MCF 10A (cell line): ENCODE measurements at regions of chr10 and their contacts with region 1.

Region 1: GRCh38 chr10:119080521-119081260 is at the start of gene EIF3A:
- DNase-seq: peak; percentile 89
- H3K4me3 Mint-ChIP-seq: peak within 1 kb of the TSS; percentile 100
- H3K27ac Mint-ChIP-seq: peak within 1 kb of the TSS; percentile 94
- H3K4me1 Mint-ChIP-seq: peaks cover 12% of the 10 kb centered on the region
- H3K27me3 Mint-ChIP-seq: no peaks in the 10 kb centered on the region
- CTCF ChIP-seq: no peak
- total RNA-seq, gene EIF3A: 190 and 226 TPM in 2 replicates

Region 2: DNA sequence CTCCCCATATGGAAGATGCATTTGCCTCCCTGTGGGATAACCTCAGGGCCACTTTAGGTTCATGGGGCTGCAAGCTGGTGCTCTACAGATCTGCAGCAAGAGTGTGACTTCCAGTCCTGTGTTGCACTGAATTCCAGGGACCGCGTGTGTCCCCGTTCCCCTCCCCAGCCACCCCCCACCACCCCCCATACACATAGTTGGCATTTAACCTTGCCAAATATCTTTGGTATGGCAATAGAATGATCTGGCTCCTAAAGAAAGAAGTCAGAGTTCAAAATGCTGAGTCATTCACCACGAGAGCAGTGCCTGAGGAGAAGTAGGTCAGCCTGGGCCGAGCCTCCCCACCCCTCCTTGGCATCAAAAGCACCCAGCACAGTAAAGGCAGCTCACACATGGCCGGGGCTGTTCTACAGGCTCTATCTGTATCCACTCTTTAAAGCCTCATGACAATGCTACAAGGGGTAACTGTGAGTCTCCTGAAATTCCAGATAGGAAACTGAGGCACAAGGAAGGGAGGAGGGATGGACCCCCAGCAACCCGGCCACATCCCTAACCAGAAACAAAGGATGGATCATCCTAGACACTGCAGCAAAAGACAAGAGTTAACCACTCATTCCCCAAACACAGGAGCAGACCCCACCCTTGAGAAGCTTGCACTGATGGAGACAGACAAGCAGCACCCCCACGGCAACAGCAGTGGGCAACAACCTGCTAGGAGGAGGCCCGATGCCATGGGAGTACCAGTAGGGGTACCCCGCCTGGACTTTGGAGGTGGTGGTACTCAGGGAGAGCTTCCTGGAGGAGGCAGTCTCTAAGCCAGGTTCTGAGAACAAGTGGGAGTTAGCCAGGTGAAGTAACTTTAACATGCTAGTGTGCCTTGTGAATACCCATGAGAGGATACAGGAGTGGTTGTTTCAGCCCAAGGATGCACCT is 121.4 kb before region 1 on chr10:
- CTCF ChIA-PET with region 1: no interaction called
- POLR2A ChIA-PET with region 1: no interaction called
- intact Hi-C with region 1: no loop called
- DNase-seq: peak; percentile 86
- H3K4me3 Mint-ChIP-seq: no peak overlapping the region
- H3K27ac Mint-ChIP-seq: no peak overlapping the region
- H3K4me1 Mint-ChIP-seq: peaks cover 28% of the 10 kb centered on the region
- H3K27me3 Mint-ChIP-seq: no peaks in the 10 kb centered on the region
- CTCF ChIP-seq: no peak

Region 3: GRCh38 chr10:119006451-119007210 is 74.1 kb before region 1 on chr10:
- CTCF ChIA-PET with region 1: no interaction called
- POLR2A ChIA-PET with region 1: interaction called, 11 read pairs
- intact Hi-C with region 1: loop called (anchors 2 kb)
- DNase-seq: peak; percentile 98
- H3K4me3 Mint-ChIP-seq: no peak overlapping the region
- H3K27ac Mint-ChIP-seq: peak overlapping the region; percentile 46
- H3K4me1 Mint-ChIP-seq: peaks cover 30% of the 10 kb centered on the region
- H3K27me3 Mint-ChIP-seq: no peaks in the 10 kb centered on the region
- CTCF ChIP-seq: no peak

Region 4: GRCh38 chr10:119028900-119029612 is 51.6 kb before region 1 on chr10:
- CTCF ChIA-PET with region 1: no interaction called
- POLR2A ChIA-PET with region 1: interaction called, 8 read pairs
- intact Hi-C with region 1: loop called (anchors 5 kb)
- DNase-seq: peak; percentile 72
- H3K4me3 Mint-ChIP-seq: peak overlapping the region; percentile 52
- H3K27ac Mint-ChIP-seq: no peak overlapping the region
- H3K4me1 Mint-ChIP-seq: peaks cover 38% of the 10 kb centered on the region
- H3K27me3 Mint-ChIP-seq: no peaks in the 10 kb centered on the region
- CTCF ChIP-seq: peak; percentile 8

Region 5: GRCh38 chr10:119090968-119091367 is 10.3 kb after region 1 on chr10:
- CTCF ChIA-PET with region 1: interaction called, 3 read pairs
- POLR2A ChIA-PET with region 1: interaction called, 21 read pairs
- intact Hi-C with region 1: no loop called
- DNase-seq: peak; percentile 80
- H3K4me3 Mint-ChIP-seq: no peak overlapping the region
- H3K27ac Mint-ChIP-seq: peak overlapping the region; percentile 49
- H3K4me1 Mint-ChIP-seq: peaks cover 20% of the 10 kb centered on the region
- H3K27me3 Mint-ChIP-seq: no peaks in the 10 kb centered on the region
- CTCF ChIP-seq: no peak

Region 6: DNA sequence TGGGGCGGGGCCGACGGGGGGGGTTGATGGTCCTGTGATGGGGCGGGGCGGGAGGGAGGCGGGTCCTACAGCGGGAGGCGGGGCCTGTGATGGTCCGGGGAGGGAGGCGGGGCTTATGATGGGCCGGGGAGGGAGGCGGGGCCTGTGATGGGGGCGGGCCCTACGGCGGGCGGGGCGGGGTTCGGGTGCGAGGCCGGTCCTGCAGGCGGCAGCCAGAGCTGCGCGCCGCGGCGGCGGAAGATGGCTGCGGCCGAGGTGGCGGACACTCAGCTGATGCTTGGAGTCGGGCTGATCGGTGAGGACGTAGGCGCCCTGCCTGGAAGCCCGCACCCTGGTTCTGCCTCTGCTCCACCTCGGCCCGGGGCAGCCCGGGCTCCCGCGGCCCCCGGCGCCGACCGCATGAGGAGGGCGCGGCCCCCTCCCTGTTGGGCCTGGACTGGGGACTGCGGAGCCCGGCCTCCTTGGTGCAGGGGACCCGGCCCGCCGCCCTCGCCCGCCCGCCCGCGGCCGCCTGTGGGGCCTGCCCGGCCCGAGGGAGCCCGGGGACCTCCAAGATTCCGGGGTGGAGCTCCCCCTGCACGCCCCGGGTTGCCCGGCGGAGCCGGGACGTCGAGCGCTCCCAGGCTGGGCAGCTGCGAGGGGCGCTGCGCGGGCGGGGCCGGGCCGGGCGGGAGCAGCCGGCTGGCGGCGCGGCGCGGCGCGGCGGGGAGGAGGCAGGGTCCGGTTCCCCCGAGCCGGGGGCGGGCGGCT is 23.4 kb after region 1 on chr10 and contains the start of gene DENND10:
- CTCF ChIA-PET with region 1: interaction called, 5 read pairs
- POLR2A ChIA-PET with region 1: interaction called, 126 read pairs
- intact Hi-C with region 1: loop called (anchors 1 kb)
- DNase-seq: peak; percentile 73
- H3K4me3 Mint-ChIP-seq: peak within 1 kb of the TSS; percentile 66
- H3K27ac Mint-ChIP-seq: no peak within 1 kb of the TSS
- H3K4me1 Mint-ChIP-seq: peaks cover 19% of the 10 kb centered on the region
- H3K27me3 Mint-ChIP-seq: no peaks in the 10 kb centered on the region
- CTCF ChIP-seq: no peak
- total RNA-seq, gene DENND10: 27.2 and 35.3 TPM in 2 replicates

Region 7: DNA sequence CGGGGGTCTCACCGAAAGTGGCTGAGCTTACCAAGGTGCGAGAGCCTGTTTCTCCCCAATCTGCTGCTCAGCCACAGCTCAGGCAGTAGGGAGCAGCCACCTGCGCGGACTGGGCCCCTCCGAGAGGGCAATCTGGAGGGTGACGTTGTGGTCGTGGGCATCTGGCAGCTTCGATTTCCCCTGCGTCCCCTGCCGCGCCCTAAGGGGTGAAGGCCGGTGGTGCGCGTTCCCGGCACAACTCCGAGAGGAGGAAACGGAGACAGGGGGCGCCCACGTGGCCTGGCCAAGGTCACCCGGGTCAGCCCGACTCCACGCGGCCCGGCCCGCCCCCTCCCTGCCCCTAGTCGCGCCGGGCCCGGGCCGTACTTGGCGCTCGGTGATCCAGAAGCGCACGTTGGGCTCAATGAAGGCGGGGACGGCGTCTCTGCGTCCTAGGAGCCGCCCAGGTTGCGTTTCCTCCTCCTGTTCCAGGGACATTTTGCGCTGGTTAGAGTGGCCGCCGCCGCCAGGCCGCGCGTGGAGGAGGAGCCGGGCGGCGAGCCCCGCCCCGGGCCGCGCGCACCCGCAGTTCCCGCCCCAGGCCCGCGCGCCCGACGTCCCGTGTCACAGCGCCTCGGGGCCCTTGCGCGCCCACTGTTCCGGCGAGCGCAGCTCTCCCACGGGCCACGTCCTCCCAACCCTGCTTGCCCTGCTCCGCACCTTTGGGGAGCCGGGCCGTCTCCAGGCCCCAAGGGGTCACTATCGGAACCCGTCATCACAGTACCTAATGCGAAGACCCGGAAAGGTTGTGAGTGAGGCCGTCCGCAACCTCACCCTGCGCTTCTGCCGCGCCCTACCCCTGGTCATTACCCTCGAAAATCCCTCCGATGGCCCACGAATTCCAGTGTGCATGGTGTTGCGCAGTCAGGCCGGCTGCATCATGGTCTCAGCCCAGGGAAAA is 84.8 kb after region 1 on chr10 and contains the start of gene SFXN4:
- CTCF ChIA-PET with region 1: no interaction called
- POLR2A ChIA-PET with region 1: interaction called, 19 read pairs
- intact Hi-C with region 1: no loop called
- DNase-seq: peak; percentile 65
- H3K4me3 Mint-ChIP-seq: peak within 1 kb of the TSS; percentile 82
- H3K27ac Mint-ChIP-seq: peak within 1 kb of the TSS; percentile 90
- H3K4me1 Mint-ChIP-seq: peaks cover 7% of the 10 kb centered on the region
- H3K27me3 Mint-ChIP-seq: no peaks in the 10 kb centered on the region
- CTCF ChIP-seq: peak; percentile 14
- total RNA-seq, gene SFXN4: 33.2 and 44.7 TPM in 2 replicates

Region 8: DNA sequence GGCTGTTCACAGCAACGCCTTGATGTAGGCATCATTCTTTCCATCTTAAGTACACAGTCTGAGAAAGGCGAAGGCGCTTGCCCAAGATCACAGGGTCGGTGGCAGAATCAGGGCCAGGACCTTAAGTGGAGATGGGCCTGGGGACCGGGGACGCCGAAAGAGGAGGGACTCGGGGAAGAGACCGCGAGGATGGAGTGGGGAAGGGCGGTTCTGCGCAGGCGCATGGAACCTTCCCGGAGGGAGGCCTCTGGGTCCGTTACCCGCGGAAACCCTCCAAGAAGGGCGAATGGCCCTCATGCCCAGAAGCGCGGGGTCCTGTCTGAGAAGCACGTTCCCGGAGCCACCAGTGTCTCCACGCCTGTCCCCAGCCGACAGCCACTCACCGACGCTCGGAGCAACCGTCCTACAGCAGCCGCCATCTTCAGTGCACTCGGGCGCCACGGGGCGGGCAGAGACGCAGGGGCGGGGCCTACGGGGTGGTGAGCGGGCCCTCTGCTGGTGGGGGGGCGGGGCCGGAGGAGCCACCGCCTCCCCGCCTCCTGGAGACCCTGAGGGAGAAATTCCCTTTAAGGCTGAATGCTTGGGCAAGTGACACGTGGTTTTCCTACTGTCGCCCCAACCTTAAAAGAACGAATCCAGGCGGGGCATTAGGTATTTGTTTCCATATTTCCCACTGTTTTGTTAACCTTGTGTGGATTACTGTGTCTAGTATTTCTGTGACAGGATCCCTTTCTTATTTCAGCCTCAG is 97.9 kb after region 1 on chr10 and contains the start of gene PRDX3:
- CTCF ChIA-PET with region 1: no interaction called
- POLR2A ChIA-PET with region 1: interaction called, 8 read pairs
- intact Hi-C with region 1: loop called (anchors 2 kb)
- DNase-seq: peak; percentile 88
- H3K4me3 Mint-ChIP-seq: peak within 1 kb of the TSS; percentile 85
- H3K27ac Mint-ChIP-seq: peak within 1 kb of the TSS; percentile 89
- H3K4me1 Mint-ChIP-seq: peaks cover 11% of the 10 kb centered on the region
- H3K27me3 Mint-ChIP-seq: no peaks in the 10 kb centered on the region
- CTCF ChIP-seq: peak; percentile 10
- total RNA-seq, gene PRDX3: 85.6 and 94.4 TPM in 2 replicates